Sigmoid colon (tissue), 7 donors: ENCODE measurements at regions of chr19 and their contacts with region 1.

Region 1: GRCh38 chr19:51108066-51108804 is at the start of gene CTU1:
- DNase-seq: peak; percentile 99
- H3K4me3 ChIP-seq: peak within 1 kb of the TSS; percentile 55 to 83 (median 70)
- H3K27ac ChIP-seq: peak within 1 kb of the TSS; percentile 66 to 76 (median 72)
- H3K4me1 ChIP-seq: peaks cover 0 to 18% (median 15%) of the 10 kb centered on the region in 4 donors
- H3K27me3 ChIP-seq: no peaks in the 10 kb centered on the region
- CTCF ChIP-seq: peak in 1 of 4 experiments; percentile 58
- EP300 ChIP-seq: peak in 1 of 4 donors; percentile 53
- POLR2A ChIP-seq: peak in 1 of 2 donors; percentile 38
- total RNA-seq, gene CTU1: 5.7 to 9.0 (median 7.3) TPM

Region 2: DNA sequence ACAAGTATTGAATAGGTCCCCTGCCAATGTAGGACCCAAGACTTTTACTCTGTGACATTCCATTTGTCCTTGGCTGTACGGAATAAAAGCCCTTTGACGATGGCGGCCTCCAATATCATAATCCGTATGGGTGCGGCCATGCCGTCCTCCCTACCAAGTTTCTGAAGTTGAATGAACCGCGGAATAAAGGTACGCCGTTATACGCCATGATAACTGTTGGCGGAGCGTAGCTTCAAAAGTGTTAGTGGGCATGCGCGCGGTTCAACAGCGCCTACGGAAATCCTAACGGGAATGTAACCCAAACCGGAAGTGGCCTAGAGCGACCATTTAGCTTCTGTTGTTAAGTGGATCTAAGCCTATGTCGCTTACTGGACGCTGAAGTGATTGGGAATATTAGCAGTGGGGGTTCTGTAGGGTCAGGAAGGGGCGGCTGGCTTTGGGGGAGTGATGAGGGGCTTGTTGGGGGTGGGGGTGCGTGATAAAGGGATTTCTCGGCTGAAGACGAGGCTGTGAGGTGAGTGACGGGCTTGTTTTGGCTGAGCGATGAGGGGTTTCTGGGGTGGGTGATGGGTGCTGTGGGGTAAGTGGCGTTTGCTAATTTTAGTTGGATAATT is 462.8 kb after region 1 on chr19 and contains the start of gene ZNF175:
- intact Hi-C with region 1: loop called (anchors 5 kb)
- DNase-seq: peak; percentile 97
- H3K4me3 ChIP-seq: peak within 1 kb of the TSS; percentile 51 to 75 (median 68)
- H3K27ac ChIP-seq: peak within 1 kb of the TSS; percentile 63 to 78 (median 76)
- H3K4me1 ChIP-seq: peaks cover 0 to 17% (median 13%) of the 10 kb centered on the region in 4 donors
- H3K27me3 ChIP-seq: no peaks in the 10 kb centered on the region
- CTCF ChIP-seq: no peak
- EP300 ChIP-seq: no peak
- POLR2A ChIP-seq: no peak
- total RNA-seq, gene ZNF175: 3.3 to 5.8 (median 5.2) TPM

Region 3: GRCh38 chr19:51593969-51594773 is 485.9 kb after region 1 on chr19:
- intact Hi-C with region 1: loop called (anchors 2 kb)
- DNase-seq: peak; percentile 99
- H3K4me3 ChIP-seq: peak overlapping the region; percentile 53 to 62 (median 58)
- H3K27ac ChIP-seq: peak overlapping the region; percentile 52 to 66 (median 62)
- H3K4me1 ChIP-seq: peaks cover 0 to 18% (median 15%) of the 10 kb centered on the region in 4 donors
- H3K27me3 ChIP-seq: peaks cover 0 to 14% (median 13%) of the 10 kb centered on the region in 3 donors
- CTCF ChIP-seq: no peak
- EP300 ChIP-seq: peak in 1 of 4 donors; percentile 25
- POLR2A ChIP-seq: no peak